Aorta (tissue), 5 donors: ENCODE measurements at regions of chr4 and their contacts with region 1.

Region 1: DNA sequence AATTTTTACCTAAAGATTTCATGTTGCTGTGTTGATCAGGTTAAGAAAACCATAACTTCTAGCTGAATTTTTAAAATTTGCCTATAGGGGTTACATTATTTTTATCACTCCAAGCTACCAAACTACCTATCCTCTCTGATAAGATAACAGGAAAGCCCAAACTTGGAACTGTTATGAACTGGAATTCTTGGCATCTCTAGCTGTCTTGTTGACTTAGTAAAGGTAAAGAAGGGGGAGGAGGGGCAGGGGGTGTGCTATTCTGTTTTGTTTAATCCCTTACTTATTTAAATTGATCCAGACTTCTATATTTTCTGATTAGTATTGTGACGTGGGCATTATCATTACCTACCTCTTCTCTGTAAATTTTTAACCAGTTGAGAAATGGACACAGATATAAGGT is 54.7 kb downstream of the SLAIN2 start:
- DNase-seq: no peak
- ATAC-seq: no peak
- H3K4me3 ChIP-seq: no peak overlapping the region
- H3K27ac ChIP-seq: no peak overlapping the region
- H3K4me1 ChIP-seq: no peaks in the 10 kb centered on the region
- H3K27me3 ChIP-seq: no peaks in the 10 kb centered on the region

Region 2: DNA sequence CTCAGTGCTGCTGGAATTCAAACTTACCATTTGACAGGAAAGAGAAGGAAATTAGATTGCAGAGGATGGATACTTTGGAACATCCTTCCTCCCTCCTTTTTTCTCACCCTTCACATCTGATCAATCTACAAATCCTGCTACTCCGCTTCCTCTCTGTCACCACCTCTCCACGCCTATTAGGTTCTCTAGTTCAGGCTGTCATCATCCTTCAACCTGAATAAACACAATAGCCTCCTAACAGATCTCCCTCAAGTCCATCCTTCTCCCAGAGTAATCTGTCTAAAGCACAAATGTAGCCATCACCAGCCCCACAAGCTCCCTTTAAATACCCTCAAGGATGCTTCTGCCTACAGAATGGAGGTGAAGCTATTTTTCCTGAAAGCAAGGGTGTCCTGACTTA is 74.7 kb before region 1 on chr4:
- intact Hi-C with region 1: no loop called
- DNase-seq: no peak
- ATAC-seq: no peak
- H3K4me3 ChIP-seq: no peak overlapping the region
- H3K27ac ChIP-seq: no peak overlapping the region
- H3K4me1 ChIP-seq: no peaks in the 10 kb centered on the region
- H3K27me3 ChIP-seq: no peaks in the 10 kb centered on the region

Region 3: GRCh38 chr4:48340965-48341775 is 54.9 kb before region 1 on chr4 and contains the start of gene SLAIN2:
- intact Hi-C with region 1: loop called in 1 of 2 experiments (anchors 10 kb)
- DNase-seq: peak; percentile 100
- ATAC-seq: peak; percentile 98
- H3K4me3 ChIP-seq: peak within 1 kb of the TSS; percentile 90 to 98
- H3K27ac ChIP-seq: peak within 1 kb of the TSS; percentile 89 to 96
- H3K4me1 ChIP-seq: peaks cover 1 to 2% of the 10 kb centered on the region in 2 donors
- H3K27me3 ChIP-seq: no peaks in the 10 kb centered on the region
- total RNA-seq, gene SLAIN2: 107 to 109 TPM

Region 4: DNA sequence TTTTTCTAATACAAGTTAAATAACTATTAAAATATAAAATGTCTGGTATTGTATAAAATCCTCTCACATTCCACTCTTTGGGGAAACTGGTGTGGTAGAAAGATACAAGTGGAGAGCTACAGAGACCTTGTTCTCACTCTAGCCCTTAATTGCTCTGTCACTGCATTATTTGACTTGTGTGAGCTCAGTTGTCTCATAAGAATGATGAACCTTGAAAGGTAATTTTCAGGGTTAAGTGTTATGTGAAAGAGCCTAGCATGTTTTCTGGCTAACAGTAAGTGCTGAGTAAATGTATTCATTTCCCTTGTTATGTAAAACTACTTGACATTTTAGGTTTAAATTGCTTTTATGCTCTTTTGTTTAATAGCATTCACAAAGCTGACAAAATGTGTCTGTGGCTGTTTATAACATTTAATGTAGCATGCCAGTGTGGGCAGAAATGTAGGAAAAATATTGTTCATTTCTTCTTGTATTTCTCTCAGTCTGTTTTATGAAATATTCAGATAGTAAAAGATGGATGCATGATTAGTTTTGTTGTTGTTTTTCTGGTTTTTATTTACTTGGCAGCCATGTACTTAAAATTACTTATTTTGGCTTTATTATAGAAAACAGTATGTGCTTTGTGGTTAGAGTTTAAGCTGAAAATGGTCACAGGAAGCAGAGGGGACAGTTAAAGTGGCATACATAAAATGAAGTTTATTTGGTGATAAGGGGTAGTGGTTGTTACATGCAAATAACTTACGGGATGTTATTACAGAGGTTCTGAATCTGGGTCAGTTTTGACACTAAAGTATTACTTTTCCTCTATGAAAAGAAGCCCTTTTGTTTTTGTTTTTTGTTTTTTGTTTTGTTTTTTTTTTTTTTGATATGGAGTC is 25.5 kb before region 1 on chr4:
- intact Hi-C with region 1: no loop called
- DNase-seq: no peak
- ATAC-seq: no peak
- H3K4me3 ChIP-seq: no peak overlapping the region
- H3K27ac ChIP-seq: no peak overlapping the region
- H3K4me1 ChIP-seq: no peaks in the 10 kb centered on the region
- H3K27me3 ChIP-seq: no peaks in the 10 kb centered on the region

Region 5: DNA sequence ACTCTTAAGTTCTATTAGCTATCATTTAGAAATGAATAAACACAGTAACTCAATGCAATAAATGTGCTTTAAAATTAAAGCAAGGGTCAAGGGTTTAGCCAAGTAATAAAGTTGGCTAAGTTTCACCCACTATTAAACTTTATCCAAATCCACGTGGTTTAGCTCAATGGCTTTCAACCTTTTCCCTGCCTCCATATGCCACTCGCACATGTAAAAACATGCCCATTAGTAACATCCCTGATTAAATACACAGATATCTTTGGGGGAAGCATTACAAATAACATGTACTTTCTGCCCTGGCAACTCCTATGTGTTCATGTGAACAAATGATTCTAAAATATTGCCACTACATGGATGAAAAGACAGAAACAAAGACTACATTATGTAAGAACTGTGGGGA is 224.8 kb after region 1 on chr4:
- intact Hi-C with region 1: no loop called
- DNase-seq: no peak
- ATAC-seq: no peak
- H3K4me3 ChIP-seq: no peak overlapping the region
- H3K27ac ChIP-seq: no peak overlapping the region
- H3K4me1 ChIP-seq: no peaks in the 10 kb centered on the region
- H3K27me3 ChIP-seq: no peaks in the 10 kb centered on the region